Activated naive CD4-positive, alpha-beta T cell treated with anti-CD3 and anti-CD28 coated beads for 36 hours (primary cell): ENCODE measurements at regions of chr12 and their contacts with region 1.

Region 1: DNA sequence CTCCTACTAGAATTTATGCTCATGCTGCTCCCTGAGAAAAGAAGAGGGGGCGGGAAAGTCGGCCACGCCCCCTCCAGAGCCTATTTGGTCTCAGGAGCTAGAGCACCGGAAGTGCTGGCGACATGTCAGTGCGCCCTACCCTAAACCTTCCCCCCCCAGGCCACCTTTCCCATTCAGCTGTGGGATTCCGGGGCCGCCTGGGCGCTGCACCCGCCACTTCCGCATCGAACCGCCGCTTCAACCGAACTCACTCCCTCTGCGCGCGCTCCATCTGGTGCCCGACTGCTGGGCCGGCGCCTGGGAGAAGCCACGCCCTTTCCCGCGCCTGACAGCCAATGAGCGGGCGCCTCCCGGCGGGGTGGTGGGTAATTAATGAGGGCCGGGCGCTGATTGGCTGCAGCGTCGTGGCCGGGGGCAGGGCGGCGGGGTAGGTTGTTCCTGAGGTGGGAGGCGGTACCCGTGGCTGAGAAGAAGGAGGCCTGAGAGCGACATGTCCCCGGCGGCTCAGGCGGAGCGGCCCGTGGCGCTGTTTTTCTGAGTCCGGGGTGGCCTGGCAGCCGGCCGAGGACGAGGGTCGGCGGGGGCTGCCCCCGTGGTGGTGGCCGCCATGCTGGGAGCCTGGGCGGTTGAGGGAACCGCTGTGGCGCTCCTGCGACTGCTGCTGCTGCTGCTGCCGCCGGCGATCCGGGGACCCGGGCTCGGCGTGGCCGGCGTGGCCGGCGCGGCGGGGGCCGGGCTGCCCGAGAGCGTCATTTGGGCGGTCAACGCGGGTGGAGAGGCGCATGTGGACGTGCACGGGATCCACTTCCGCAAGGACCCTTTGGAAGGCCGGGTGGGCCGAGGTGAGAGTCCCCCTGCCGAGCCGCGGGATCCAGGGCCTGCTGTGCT is at the start of gene MLEC:
- DNase-seq: peak; percentile 99
- H3K4me3 Mint-ChIP-seq: peak within 1 kb of the TSS; percentile 87
- H3K27ac Mint-ChIP-seq: peak within 1 kb of the TSS; percentile 91
- H3K4me1 Mint-ChIP-seq: peaks cover 42% of the 10 kb centered on the region
- H3K27me3 Mint-ChIP-seq: no peaks in the 10 kb centered on the region
- total RNA-seq, gene MLEC: 78.6 to 89.7 TPM

Region 2: GRCh38 chr12:120327593-120327992 is 359.3 kb before region 1 on chr12 and contains the start of gene PLA2G1B:
- CTCF ChIA-PET with region 1: no interaction called
- intact Hi-C with region 1: loop called (anchors 2 kb)
- DNase-seq: no peak
- H3K4me3 Mint-ChIP-seq: no peak within 1 kb of the TSS
- H3K27ac Mint-ChIP-seq: no peak within 1 kb of the TSS
- H3K4me1 Mint-ChIP-seq: no peaks in the 10 kb centered on the region
- H3K27me3 Mint-ChIP-seq: peaks cover 3% of the 10 kb centered on the region
- total RNA-seq, gene PLA2G1B: not detected

Region 3: GRCh38 chr12:120428597-120429229 is 258.2 kb before region 1 on chr12:
- CTCF ChIA-PET with region 1: no interaction called
- intact Hi-C with region 1: no loop called
- DNase-seq: no peak
- H3K4me3 Mint-ChIP-seq: no peak overlapping the region
- H3K27ac Mint-ChIP-seq: no peak overlapping the region
- H3K4me1 Mint-ChIP-seq: peaks cover 3% of the 10 kb centered on the region
- H3K27me3 Mint-ChIP-seq: no peaks in the 10 kb centered on the region

Region 4: GRCh38 chr12:120534203-120534702 is 152.7 kb before region 1 on chr12 and contains the start of gene RNF10:
- CTCF ChIA-PET with region 1: no interaction called
- intact Hi-C with region 1: loop called (anchors 1 kb)
- DNase-seq: peak; percentile 78
- H3K4me3 Mint-ChIP-seq: peak within 1 kb of the TSS; percentile 92
- H3K27ac Mint-ChIP-seq: peak within 1 kb of the TSS; percentile 94
- H3K4me1 Mint-ChIP-seq: peaks cover 47% of the 10 kb centered on the region
- H3K27me3 Mint-ChIP-seq: no peaks in the 10 kb centered on the region
- total RNA-seq, gene RNF10: 159 to 166 TPM

Region 5: DNA sequence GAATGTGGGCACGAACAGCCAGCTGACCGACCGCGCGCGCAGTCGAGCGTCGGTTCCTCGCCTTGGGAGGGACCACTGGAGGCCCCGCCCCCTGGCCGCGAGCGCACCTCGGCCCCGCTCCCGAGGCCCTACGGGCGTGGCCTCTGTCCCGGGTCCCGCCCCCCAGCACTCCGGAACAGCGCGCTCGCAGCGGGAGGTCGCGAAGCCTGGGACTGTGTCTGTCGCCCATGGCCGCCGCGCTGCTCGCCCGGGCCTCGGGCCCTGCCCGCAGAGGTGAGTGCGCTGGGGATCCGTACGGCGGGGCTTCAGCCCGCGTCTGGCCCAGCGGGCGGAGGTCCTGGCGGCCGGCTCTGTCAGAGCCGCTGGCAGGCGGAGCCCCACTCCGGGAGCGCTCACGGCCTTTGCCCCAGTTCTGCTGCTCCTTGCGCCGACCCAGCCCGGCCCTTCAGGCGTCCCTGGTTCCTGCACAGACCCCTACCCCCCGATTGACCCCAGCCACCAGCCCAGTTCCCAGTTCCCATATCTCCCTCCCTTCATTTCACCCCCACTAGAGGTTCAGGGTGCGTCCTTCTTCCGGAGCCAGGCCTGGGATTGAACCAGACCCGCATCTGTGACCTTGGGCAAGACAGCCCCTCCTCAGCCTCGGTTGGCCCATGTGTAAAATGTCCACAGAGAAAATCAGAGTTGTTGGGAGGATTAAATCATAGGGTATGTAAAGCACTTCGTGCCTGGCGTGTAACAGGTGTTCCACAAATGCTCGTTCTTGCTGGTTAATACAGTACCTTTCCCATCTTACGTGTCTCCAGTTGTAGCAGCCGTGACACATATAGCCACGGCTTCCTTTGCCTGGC is 39.0 kb after region 1 on chr12 and contains the start of gene ACADS:
- CTCF ChIA-PET with region 1: no interaction called
- intact Hi-C with region 1: loop called (anchors 1 kb)
- DNase-seq: peak; percentile 91
- H3K4me3 Mint-ChIP-seq: peak within 1 kb of the TSS; percentile 74
- H3K27ac Mint-ChIP-seq: no peak within 1 kb of the TSS
- H3K4me1 Mint-ChIP-seq: peaks cover 14% of the 10 kb centered on the region
- H3K27me3 Mint-ChIP-seq: no peaks in the 10 kb centered on the region
- total RNA-seq, gene ACADS: 15.4 to 15.8 TPM

Region 6: DNA sequence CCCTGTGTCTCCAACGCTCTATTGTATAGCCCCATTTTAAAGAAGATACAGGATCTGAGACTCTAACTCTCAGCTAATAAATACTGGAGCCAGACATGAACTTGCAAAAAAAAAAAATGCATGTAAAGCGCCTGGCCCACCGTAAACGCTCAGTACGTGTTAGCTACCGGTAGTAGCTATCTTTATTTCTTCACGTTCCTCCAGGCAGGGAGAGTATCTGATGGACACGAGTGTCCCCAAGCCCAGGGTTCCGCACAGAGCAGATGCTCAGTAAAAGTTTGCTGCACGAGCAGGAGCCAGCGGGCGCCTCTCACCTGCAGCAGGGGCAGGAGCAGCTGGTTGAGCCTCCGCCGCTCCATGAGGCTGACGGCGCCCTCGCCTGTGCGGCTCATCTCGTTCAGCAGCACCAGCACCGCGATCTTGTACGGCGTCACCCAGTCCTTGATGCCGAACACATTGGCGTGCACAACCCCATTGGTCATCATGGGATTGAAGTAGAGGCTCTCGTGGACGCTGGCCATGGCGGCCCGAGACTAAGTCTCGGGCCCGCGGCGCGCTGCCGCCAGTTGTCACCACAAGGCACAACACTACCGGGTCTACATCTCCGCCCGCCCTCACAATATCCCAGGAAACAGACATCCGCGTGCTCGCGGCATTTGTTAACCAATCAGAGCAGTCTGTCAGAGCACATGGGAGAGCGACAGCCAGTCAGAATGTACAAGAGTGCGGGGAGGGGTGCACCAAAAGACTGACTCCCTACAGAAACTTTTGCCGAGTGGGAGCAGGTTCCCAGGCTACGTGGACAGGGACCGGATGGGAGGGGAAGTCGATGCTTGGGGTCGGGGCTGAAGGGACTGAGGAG is 665.1 kb after region 1 on chr12 and contains the start of gene ANAPC5:
- CTCF ChIA-PET with region 1: no interaction called
- intact Hi-C with region 1: loop called (anchors 1 kb)
- DNase-seq: peak; percentile 96
- H3K4me3 Mint-ChIP-seq: peak within 1 kb of the TSS; percentile 98
- H3K27ac Mint-ChIP-seq: peak within 1 kb of the TSS; percentile 86
- H3K4me1 Mint-ChIP-seq: peaks cover 25% of the 10 kb centered on the region
- H3K27me3 Mint-ChIP-seq: no peaks in the 10 kb centered on the region
- total RNA-seq, gene ANAPC5: 117 to 119 TPM